ENCODE measurements at regions of chr18 and their contacts with region 1.

Region 1: DNA sequence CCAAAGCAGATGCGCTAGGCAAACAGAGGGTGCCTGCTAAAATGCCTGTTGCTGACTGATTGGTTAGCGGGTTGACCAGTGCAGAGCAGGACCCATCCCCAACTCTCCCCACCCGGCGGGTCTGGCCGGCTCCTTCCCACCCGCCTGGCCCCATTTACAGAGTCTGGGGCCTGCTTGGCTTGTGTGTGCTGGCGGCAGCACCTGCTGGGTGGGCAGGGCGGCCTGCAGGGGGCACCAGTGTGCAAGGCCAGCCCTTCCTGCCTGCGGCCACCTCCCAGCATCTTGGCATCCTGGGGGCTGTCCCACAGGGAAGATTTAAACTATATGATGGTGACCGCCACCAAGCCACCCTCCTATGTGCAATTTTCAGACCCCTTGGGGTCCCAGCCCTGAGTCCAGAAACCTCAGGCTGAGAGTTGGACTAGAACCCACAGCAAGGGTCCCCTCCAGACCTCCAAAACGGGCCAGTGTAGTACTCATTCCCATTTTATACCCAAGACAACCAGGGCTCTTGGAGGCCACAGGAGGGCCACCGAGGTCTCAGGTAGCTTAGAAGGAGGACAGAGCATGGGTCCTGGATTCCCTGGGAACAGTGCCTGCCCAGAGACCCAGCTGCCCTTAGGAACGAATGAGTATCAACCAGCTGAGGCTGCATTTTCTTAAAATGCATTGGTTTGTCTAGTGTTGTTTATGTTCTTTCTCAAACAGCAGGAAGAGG is 173.6 kb downstream of the SMAD7 start:
- DNase-seq: peak; percentile 38 to 53
- H3K4me3 ChIP-seq: no peak overlapping the region
- H3K27ac ChIP-seq: no peak overlapping the region
- H3K4me1 ChIP-seq: peaks cover 0 to 24% of the 10 kb centered on the region in 2 donors
- H3K27me3 ChIP-seq: no peaks in the 10 kb centered on the region
- CTCF ChIP-seq: peak; percentile 72 to 83 (median 79)
- POLR2A ChIP-seq: no peak

Region 2: GRCh38 chr18:48875942-48876511 is 98.8 kb after region 1 on chr18:
- intact Hi-C with region 1: no loop called
- DNase-seq: no peak
- H3K4me3 ChIP-seq: no peak overlapping the region
- H3K27ac ChIP-seq: no peak overlapping the region
- H3K4me1 ChIP-seq: no peaks in the 10 kb centered on the region
- H3K27me3 ChIP-seq: no peaks in the 10 kb centered on the region
- CTCF ChIP-seq: no peak
- POLR2A ChIP-seq: no peak

Region 3: DNA sequence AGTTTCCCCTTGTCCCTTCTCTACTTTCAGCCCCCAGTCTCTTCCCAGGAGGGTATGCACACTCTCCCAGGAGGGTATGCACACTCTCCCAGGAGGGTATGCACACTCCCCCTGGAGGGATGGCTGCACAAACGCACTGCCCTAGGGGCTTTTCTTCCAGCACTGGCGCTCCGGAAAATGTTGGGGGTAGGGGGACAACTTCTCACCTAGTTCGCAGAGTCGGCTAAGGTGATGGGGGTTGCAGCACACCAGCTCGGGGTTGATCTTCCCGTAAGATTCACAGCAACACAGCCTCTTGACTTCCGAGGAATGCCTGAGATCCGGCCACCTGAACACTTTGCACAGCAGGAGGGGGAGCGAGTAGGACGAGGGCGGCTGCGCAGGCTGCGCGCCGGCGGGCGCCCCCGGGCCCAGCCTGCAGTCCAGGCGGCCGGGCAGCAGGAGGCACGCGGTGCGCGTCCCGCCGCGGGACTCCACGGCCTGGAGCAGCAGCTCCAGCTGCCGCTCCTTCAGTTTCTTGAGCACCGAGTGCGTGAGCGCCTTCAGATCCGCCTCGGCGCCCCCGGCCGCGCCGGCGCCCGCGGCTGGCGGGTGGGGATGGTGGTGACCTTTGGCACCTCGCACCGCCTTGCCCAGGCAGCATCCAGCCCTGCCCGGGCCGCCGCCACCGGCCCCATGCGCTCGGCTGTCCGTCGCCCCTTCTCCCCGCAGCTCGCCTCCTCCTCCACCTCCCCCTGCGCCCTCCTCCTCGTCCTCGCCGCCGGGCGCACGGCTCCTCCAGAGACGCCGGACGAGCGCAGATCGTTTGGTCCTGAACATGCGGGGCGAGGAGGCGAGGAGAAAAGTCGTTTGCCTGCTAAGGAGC is 172.7 kb after region 1 on chr18:
- intact Hi-C with region 1: loop called (anchors 10 kb)
- DNase-seq: no peak
- H3K4me3 ChIP-seq: peak overlapping the region; percentile 51 to 71
- H3K27ac ChIP-seq: peak overlapping the region; percentile 99 to 100
- H3K4me1 ChIP-seq: peaks cover 14 to 25% of the 10 kb centered on the region in 2 donors
- H3K27me3 ChIP-seq: no peaks in the 10 kb centered on the region
- CTCF ChIP-seq: peak in 2 of 4 experiments; percentile 53 to 57
- POLR2A ChIP-seq: peak in 1 of 2 donors; percentile 53